ENCODE measurements at regions of chr11 and their contacts with region 1.

Region 1: GRCh38 chr11:3867209-3868091 is 12.0 kb downstream of the STIM1 start:
- DNase-seq: no peak
- H3K4me3 ChIP-seq: no peak overlapping the region
- H3K27ac ChIP-seq: peak overlapping the region; percentile 14 to 61 (median 46)
- H3K4me1 ChIP-seq: peaks cover 12 to 79% (median 40%) of the 10 kb centered on the region in 3 donors
- H3K27me3 ChIP-seq: no peaks in the 10 kb centered on the region
- CTCF ChIP-seq: no peak
- POLR2A ChIP-seq: no peak

Region 2: DNA sequence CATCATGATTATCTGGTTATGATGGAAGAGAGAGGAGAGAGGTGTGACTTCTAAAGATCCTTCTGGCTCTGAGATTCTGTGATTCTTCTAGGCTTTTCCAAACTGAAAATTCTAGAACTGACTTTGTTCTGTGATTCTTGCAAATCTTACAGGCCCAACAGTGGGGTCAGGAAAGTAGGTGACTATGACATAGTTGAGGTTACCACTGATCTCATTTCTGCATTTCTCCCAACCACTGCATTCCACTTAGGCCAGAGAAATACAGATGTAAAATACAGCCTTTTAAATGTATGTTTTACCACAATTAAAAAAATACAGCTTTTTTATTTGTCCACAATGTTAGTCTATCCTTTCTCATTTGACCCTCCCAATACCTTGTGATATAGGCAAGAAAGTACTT is 71.8 kb after region 1 on chr11:
- intact Hi-C with region 1: no loop called
- DNase-seq: no peak
- H3K4me3 ChIP-seq: no peak overlapping the region
- H3K27ac ChIP-seq: peak overlapping the region in 3 of 4 donors; percentile 20 to 71 (median 56)
- H3K4me1 ChIP-seq: peaks cover 29 to 96% (median 48%) of the 10 kb centered on the region in 3 donors
- H3K27me3 ChIP-seq: no peaks in the 10 kb centered on the region
- CTCF ChIP-seq: no peak
- POLR2A ChIP-seq: no peak

Region 3: DNA sequence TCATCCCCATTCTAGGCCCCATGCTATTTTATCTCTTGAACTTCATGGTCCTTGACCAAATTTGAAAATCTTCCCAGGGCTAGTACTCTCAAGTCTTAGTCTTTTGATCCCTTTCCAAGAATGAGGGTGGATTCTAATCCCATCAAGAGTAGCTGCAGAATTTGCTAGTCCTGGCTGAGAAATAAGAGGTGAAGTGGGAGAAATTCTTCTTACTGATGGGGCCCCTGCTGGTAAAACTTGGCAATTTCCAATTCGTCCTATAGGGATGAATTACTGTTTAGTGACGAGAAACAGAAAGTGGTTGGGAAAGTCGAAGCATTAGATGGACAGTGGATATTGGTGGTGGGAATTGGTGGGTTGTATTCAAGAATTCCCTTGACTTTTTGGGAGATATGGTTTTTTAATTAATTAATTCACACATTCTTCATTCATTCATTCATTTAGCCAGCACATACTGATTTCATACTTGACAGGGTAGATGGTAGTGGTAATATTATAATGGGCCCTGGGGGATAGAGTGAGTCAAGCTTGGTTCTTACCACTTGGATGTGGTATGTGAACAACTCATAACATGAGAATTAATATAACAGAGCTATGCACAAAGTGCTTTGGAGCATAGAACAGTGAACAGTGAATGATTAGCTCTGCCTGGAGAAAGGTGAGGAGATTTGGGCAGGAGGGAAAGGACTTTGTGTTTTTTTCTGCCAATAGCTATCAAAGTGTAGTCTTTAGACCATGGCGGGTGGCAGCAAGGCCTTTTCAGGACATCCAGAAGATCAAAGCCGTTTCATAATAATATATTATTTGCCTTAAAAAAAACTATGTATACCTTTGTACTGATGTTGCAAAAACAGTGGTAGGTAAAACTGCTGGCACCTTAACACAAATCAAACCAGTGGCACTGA is 91.8 kb after region 1 on chr11:
- intact Hi-C with region 1: loop called (anchors 10 kb)
- DNase-seq: no peak
- H3K4me3 ChIP-seq: no peak overlapping the region
- H3K27ac ChIP-seq: peak overlapping the region in 2 of 4 donors; percentile 57 to 61
- H3K4me1 ChIP-seq: peaks cover 1 to 89% (median 31%) of the 10 kb centered on the region in 3 donors
- H3K27me3 ChIP-seq: no peaks in the 10 kb centered on the region
- CTCF ChIP-seq: peak in 3 of 6 experiments; percentile 27 to 52 (median 46)
- POLR2A ChIP-seq: no peak